H1 (cell line): ENCODE measurements at regions of chr5 and their contacts with region 1.

Region 1: DNA sequence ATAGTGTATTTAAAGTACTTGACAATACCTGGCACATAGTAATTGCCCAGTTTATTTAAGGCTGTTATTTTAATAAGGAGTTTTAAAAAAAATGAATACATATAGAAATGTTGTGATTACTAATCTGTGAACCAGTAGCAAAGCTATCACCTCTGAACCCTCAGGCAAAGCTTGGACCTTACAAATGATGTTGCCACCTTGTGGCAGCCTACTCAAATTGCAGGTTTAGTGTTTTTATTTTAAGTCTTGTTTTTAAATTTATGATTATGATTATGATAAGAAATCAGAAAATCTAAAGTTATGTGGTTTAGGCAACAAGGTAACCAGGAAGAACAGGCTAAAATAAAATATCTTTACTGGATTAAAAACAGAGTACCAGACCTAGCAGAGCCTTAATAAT is 35.8 kb downstream of the PPARGC1B start:
- DNase-seq: no peak
- H3K4me3 ChIP-seq: no peak overlapping the region
- H3K27ac ChIP-seq: no peak overlapping the region
- H3K4me1 ChIP-seq: peaks cover 0 to 2% (median 0%) of the 10 kb centered on the region in 4 experiments; a peak in 1 of 7 replicates
- H3K27me3 ChIP-seq: no peaks in the 10 kb centered on the region
- CTCF ChIP-seq: peak in 2 of 3 experiments; percentile 28 to 47; a peak in 2 of 4 replicates
- EP300 ChIP-seq: no peak
- POLR2A ChIP-seq: no peak
- RAD21 ChIP-seq: peak; percentile 21 to 32; a peak in 3 of 4 replicates

Region 2: GRCh38 chr5:149724130-149724840 is 41.6 kb before region 1 on chr5:
- CTCF ChIA-PET with region 1: interaction called, 10 read pairs
- POLR2A ChIA-PET with region 1: no interaction called
- DNase-seq: no peak
- H3K4me3 ChIP-seq: no peak overlapping the region
- H3K27ac ChIP-seq: no peak overlapping the region
- H3K4me1 ChIP-seq: no peaks in the 10 kb centered on the region
- H3K27me3 ChIP-seq: peaks cover 0 to 2% (median 0%) of the 10 kb centered on the region in 4 experiments; a peak in 3 of 7 replicates
- CTCF ChIP-seq: no peak
- EP300 ChIP-seq: no peak
- POLR2A ChIP-seq: no peak
- RAD21 ChIP-seq: no peak

Region 3: DNA sequence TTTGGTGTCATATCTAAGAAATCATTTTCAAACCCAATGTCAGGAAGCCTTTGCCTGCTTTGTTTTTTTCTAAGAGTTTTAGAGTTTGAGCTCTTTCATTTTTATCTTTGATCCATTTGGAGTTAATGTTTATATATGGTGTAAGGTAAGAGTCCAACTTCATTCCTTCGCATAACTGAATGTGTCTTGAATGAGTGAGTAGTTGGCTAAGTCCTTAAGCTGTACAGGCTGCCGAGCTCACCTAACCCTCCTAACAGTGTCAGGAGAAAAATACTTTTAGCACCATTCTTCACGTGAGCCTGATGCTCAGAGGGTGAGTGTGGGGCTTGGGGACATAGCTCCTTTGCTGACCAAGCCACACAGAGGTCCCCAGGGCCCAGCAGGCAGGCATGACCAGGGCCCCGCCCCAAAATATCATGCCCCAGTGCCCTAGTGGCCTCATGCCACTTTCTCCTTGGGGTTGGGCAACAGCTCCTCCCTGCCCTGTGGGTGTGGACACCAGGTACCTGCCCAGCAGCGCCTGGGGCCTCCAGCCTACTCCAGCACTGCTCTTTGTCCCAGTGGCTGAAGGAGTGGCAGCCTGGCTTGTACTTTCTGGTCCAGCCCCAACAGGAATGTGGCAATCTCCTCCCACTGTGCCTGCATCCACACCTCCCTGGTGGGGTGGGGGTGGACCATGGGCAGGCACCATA is 18.6 kb before region 1 on chr5:
- CTCF ChIA-PET with region 1: interaction called, 13 read pairs
- POLR2A ChIA-PET with region 1: no interaction called
- DNase-seq: no peak
- H3K4me3 ChIP-seq: no peak overlapping the region
- H3K27ac ChIP-seq: no peak overlapping the region
- H3K4me1 ChIP-seq: peaks cover 0 to 3% (median 0%) of the 10 kb centered on the region in 4 experiments; a peak in 2 of 7 replicates
- H3K27me3 ChIP-seq: no peaks in the 10 kb centered on the region
- CTCF ChIP-seq: no peak
- EP300 ChIP-seq: no peak
- POLR2A ChIP-seq: no peak
- RAD21 ChIP-seq: no peak

Region 4: GRCh38 chr5:149782018-149782894 is 16.3 kb after region 1 on chr5:
- CTCF ChIA-PET with region 1: interaction called, 70 read pairs
- POLR2A ChIA-PET with region 1: interaction called, 3 read pairs
- DNase-seq: no peak
- H3K4me3 ChIP-seq: no peak overlapping the region
- H3K27ac ChIP-seq: no peak overlapping the region
- H3K4me1 ChIP-seq: peaks cover 3 to 11% (median 7%) of the 10 kb centered on the region in 4 experiments
- H3K27me3 ChIP-seq: no peaks in the 10 kb centered on the region
- CTCF ChIP-seq: no peak
- EP300 ChIP-seq: no peak
- POLR2A ChIP-seq: no peak
- RAD21 ChIP-seq: no peak

Region 5: DNA sequence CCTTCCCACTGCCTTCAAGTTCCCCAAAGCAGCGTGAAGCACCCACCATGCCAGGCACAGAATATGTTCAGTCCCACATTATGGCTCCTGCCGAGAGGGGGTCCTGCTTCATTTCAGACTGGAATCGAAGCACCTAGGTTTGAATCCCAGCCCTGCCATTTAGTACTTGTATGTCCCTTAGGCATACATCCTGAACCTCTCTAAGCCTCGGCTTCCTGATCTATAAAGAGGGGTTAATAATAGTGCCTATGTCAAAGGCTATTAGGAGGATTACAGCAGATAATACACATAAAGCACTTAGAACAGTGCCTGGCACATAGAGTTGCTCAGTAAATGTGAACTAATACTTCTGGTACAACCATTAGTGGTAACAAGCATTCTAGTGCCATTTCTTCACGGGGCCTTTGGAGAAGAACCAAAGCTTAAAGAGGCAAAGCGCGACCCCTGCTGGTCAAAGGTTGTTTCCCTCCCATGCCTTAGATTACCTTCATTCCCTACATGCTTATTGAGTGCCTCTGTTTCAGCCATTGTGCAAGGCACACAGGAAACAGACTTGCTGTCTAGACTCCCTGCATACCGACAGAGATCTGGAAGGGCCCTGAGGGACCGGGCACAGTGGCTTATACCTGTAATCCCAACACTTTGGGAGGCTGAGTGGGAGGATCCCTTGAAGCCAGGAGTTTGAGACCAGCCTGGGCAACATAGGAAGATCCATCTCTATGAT is 62.4 kb after region 1 on chr5:
- CTCF ChIA-PET with region 1: interaction called, 10 read pairs
- POLR2A ChIA-PET with region 1: no interaction called
- DNase-seq: peak; percentile 73 to 94
- H3K4me3 ChIP-seq: no peak overlapping the region
- H3K27ac ChIP-seq: no peak overlapping the region
- H3K4me1 ChIP-seq: no peaks in the 10 kb centered on the region
- H3K27me3 ChIP-seq: no peaks in the 10 kb centered on the region
- CTCF ChIP-seq: peak; percentile 54 to 96 (median 88)
- EP300 ChIP-seq: no peak
- POLR2A ChIP-seq: no peak
- RAD21 ChIP-seq: peak; percentile 92 to 94